GM12878 (cell line): ENCODE measurements at regions of chr3 and their contacts with region 1.

Region 1: DNA sequence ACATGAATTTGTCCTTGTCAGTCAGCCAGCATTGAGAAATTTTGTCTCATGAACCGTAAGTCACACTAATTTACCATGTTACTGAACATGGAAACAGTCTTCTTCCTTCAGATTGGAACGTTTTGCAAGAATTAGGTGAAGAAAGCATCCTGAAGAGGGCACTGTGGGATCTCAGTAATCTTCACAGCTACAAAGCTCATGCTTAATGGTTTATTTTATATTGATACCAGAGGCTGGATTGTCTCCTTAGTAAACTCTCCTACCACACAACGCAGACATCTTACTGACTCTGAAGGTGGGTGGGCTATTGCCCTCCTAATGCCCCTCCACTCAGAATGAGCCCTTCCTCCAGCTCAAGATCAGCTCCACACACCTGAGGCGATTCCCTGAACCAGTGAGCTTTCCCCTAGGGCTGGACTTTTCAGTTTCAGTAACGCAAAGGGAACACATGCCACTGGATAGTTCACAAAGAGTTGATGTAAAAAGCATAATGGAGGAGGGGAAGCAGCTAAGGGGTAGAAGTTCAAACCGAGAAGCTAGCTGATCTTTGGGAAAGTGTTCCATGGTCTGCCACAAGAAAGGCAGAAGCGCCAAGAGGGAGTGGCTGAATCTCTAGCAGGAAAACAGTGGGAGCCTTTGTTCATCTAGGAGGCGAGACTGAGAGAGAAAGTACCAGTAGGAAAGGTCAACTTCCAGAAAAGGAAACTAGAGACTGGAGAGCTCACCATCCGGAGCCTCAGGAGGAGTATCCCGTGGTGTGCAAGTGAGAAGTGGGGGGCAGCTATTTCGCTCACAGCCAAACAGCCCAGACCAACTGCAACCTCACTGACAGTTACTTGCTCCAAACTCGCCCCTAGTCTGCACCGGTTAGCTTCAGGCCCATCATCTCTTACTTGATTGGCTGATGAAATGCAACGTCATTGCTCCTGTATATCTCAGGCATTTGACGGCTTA is at the start of gene SLC9C1:
- DNase-seq: peak; percentile 85
- ATAC-seq: peak; percentile 78
- H3K4me3 ChIP-seq: peak within 1 kb of the TSS; percentile 52; the same call in 1 of the 2 replicates
- H3K27ac ChIP-seq: peak within 1 kb of the TSS; percentile 71
- H3K4me1 ChIP-seq: peaks cover 7% of the 10 kb centered on the region; the same call in 1 of the 2 replicates
- H3K27me3 ChIP-seq: no peaks in the 10 kb centered on the region
- CTCF ChIP-seq: peak; percentile 50 to 76 (median 71); a peak in 5 of 6 replicates
- EP300 ChIP-seq: no peak
- POLR2A ChIP-seq: no peak
- RAD21 ChIP-seq: peak; percentile 81
- polyA plus RNA-seq, gene SLC9C1: not detected

Region 2: GRCh38 chr3:112117841-112118571 is 175.6 kb before region 1 on chr3:
- CTCF ChIA-PET with region 1: interaction called, 7 read pairs
- POLR2A ChIA-PET with region 1: interaction called, 6 read pairs
- RAD21 ChIA-PET with region 1: interaction called, 7 read pairs
- SMC1A ChIA-PET with region 1: interaction called, 10 read pairs
- in situ Hi-C with region 1: loop called (anchors 5 kb)
- intact Hi-C with region 1: no loop called
- DNase-seq: no peak
- ATAC-seq: peak; percentile 48
- H3K4me3 ChIP-seq: peak overlapping the region; percentile 48; the same call in 1 of the 2 replicates
- H3K27ac ChIP-seq: peak overlapping the region; percentile 95
- H3K4me1 ChIP-seq: peaks cover 92% of the 10 kb centered on the region
- H3K27me3 ChIP-seq: no peaks in the 10 kb centered on the region
- CTCF ChIP-seq: peak; percentile 32 to 34 (median 33); a peak in 5 of 6 replicates
- EP300 ChIP-seq: no peak
- POLR2A ChIP-seq: peak; percentile 47; the same call in 1 of the 2 replicates
- RAD21 ChIP-seq: peak; percentile 43

Region 3: DNA sequence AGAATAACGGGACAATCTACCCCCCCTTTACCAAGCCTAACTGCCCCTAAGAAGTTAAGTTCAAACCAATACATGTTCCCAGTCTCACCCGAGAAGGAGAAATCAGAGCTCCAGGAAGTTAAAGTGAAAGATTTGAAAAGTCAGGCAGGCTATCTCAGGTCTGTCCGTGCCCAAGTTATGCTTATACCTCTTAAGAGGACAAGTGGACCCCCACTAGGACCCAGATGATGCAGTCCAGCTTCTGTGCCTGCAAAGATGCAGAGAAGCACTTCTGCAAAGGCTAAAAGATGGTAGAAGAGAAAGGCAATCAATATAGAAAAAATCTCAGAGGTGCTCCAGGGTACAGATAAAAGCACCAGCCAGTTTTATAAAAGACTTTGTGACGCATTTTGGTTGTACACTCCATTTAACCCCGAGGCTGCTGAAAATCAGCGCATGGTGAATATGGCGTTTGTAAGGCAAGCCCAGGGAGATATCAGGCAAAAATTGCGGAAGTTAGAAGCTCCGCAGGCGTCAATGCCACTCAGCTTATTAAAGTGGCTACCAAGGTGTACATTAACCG is 10.2 kb after region 1 on chr3:
- CTCF ChIA-PET with region 1: interaction called, 39 read pairs
- POLR2A ChIA-PET with region 1: no interaction called
- RAD21 ChIA-PET with region 1: interaction called, 8 read pairs
- SMC1A ChIA-PET with region 1: interaction called, 10 read pairs
- in situ Hi-C with region 1: no loop called
- intact Hi-C with region 1: no loop called
- DNase-seq: no peak
- ATAC-seq: peak; percentile 64
- H3K4me3 ChIP-seq: peak overlapping the region; percentile 50; the same call in 1 of the 2 replicates
- H3K27ac ChIP-seq: 0 out of 2 replicates have a peak overlapping the region, but pooled peaks have one; percentile 21
- H3K4me1 ChIP-seq: peaks cover 9% of the 10 kb centered on the region
- H3K27me3 ChIP-seq: no peaks in the 10 kb centered on the region
- CTCF ChIP-seq: no peak
- EP300 ChIP-seq: no peak
- POLR2A ChIP-seq: no peak
- RAD21 ChIP-seq: no peak

Region 4: GRCh38 chr3:112333002-112333380 is 39.3 kb after region 1 on chr3 and contains the start of gene CD200:
- CTCF ChIA-PET with region 1: interaction called, 11 read pairs
- POLR2A ChIA-PET with region 1: interaction called, 3 read pairs
- RAD21 ChIA-PET with region 1: interaction called, 32 read pairs
- SMC1A ChIA-PET with region 1: interaction called, 29 read pairs
- in situ Hi-C with region 1: no loop called
- intact Hi-C with region 1: no loop called
- DNase-seq: no peak
- ATAC-seq: peak; percentile 70
- H3K4me3 ChIP-seq: peak within 1 kb of the TSS; percentile 96
- H3K27ac ChIP-seq: peak within 1 kb of the TSS; percentile 74
- H3K4me1 ChIP-seq: no peaks in the 10 kb centered on the region
- H3K27me3 ChIP-seq: no peaks in the 10 kb centered on the region
- CTCF ChIP-seq: no peak
- EP300 ChIP-seq: no peak
- POLR2A ChIP-seq: peak; percentile 83
- RAD21 ChIP-seq: no peak
- polyA plus RNA-seq, gene CD200: 39.8 to 44.0 TPM

Region 5: DNA sequence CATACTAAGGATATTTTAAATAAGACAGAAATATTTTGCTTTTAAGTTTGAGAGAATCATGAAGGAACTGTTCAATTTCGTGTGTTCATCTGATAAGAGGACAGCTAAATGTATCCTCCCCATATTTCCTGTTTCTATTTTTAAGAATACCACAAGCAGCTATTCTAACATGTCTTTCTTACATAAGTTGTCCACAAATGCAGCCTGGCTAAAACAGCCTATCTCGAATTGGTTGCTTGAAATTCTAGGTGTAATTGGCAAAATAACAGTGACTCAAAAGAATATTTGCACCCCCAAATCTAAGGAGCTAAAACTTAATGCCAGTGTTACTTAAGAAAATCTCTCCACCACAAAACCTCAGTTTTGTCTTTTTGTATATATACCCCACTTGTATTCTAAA is 170.6 kb after region 1 on chr3:
- CTCF ChIA-PET with region 1: no interaction called
- POLR2A ChIA-PET with region 1: no interaction called
- RAD21 ChIA-PET with region 1: interaction called, 13 read pairs
- SMC1A ChIA-PET with region 1: interaction called, 6 read pairs
- in situ Hi-C with region 1: no loop called
- intact Hi-C with region 1: no loop called
- DNase-seq: peak; percentile 67
- ATAC-seq: peak; percentile 45
- H3K4me3 ChIP-seq: peak overlapping the region; percentile 16; the same call in 1 of the 2 replicates
- H3K27ac ChIP-seq: peak overlapping the region; percentile 77
- H3K4me1 ChIP-seq: peaks cover 61% of the 10 kb centered on the region
- H3K27me3 ChIP-seq: no peaks in the 10 kb centered on the region
- CTCF ChIP-seq: no peak
- EP300 ChIP-seq: peak; percentile 10 to 78; a peak in 2 of 4 replicates
- POLR2A ChIP-seq: no peak
- RAD21 ChIP-seq: no peak

Region 6: GRCh38 chr3:112531358-112531781 is 237.7 kb after region 1 on chr3:
- CTCF ChIA-PET with region 1: interaction called, 47 read pairs
- POLR2A ChIA-PET with region 1: interaction called, 3 read pairs
- RAD21 ChIA-PET with region 1: interaction called, 13 read pairs
- SMC1A ChIA-PET with region 1: interaction called, 24 read pairs
- in situ Hi-C with region 1: no loop called
- intact Hi-C with region 1: loop called (anchors 1 kb)
- DNase-seq: no peak
- ATAC-seq: peak; percentile 39; the same call in 2 of the 3 replicates
- H3K4me3 ChIP-seq: no peak overlapping the region
- H3K27ac ChIP-seq: no peak overlapping the region
- H3K4me1 ChIP-seq: no peaks in the 10 kb centered on the region
- H3K27me3 ChIP-seq: no peaks in the 10 kb centered on the region
- CTCF ChIP-seq: peak; percentile 21 to 43 (median 41); a peak in 3 of 6 replicates
- EP300 ChIP-seq: no peak
- POLR2A ChIP-seq: no peak
- RAD21 ChIP-seq: peak; percentile 36; the same call in 1 of the 2 replicates

Region 7: GRCh38 chr3:112642912-112643506 is 349.4 kb after region 1 on chr3:
- CTCF ChIA-PET with region 1: interaction called, 11 read pairs
- POLR2A ChIA-PET with region 1: no interaction called
- RAD21 ChIA-PET with region 1: interaction called, 7 read pairs
- SMC1A ChIA-PET with region 1: interaction called, 5 read pairs
- in situ Hi-C with region 1: no loop called
- intact Hi-C with region 1: no loop called
- DNase-seq: peak; percentile 46
- ATAC-seq: peak; percentile 99
- H3K4me3 ChIP-seq: no peak overlapping the region
- H3K27ac ChIP-seq: no peak overlapping the region
- H3K4me1 ChIP-seq: peaks cover 15% of the 10 kb centered on the region
- H3K27me3 ChIP-seq: peaks cover 0 to 8% of the 10 kb centered on the region in 2 experiments; a peak in 3 of 4 replicates
- CTCF ChIP-seq: peak; percentile 86 to 96 (median 93)
- EP300 ChIP-seq: no peak
- POLR2A ChIP-seq: no peak
- RAD21 ChIP-seq: peak; percentile 85

Region 8: GRCh38 chr3:112894258-112894657 is 600.6 kb after region 1 on chr3:
- CTCF ChIA-PET with region 1: no interaction called
- POLR2A ChIA-PET with region 1: no interaction called
- RAD21 ChIA-PET with region 1: no interaction called
- SMC1A ChIA-PET with region 1: no interaction called
- in situ Hi-C with region 1: no loop called
- intact Hi-C with region 1: no loop called
- DNase-seq: no peak
- ATAC-seq: no peak
- H3K4me3 ChIP-seq: no peak overlapping the region
- H3K27ac ChIP-seq: no peak overlapping the region
- H3K4me1 ChIP-seq: no peaks in the 10 kb centered on the region
- H3K27me3 ChIP-seq: no peaks in the 10 kb centered on the region
- CTCF ChIP-seq: no peak
- EP300 ChIP-seq: no peak
- POLR2A ChIP-seq: no peak
- RAD21 ChIP-seq: no peak